ENCODE measurements at regions of chr6 and their contacts with region 1.

Region 1: GRCh38 chr6:136226027-136226673 is 24.0 kb downstream of the MTFR2 start:
- DNase-seq: peak in 1 of 2 experiments; percentile 72
- H3K4me3 ChIP-seq: no peak overlapping the region
- H3K27ac ChIP-seq: no peak overlapping the region
- H3K4me1 ChIP-seq: no peaks in the 10 kb centered on the region
- H3K27me3 ChIP-seq: no peaks in the 10 kb centered on the region
- CTCF ChIP-seq: peak; percentile 74 to 97 (median 92)
- EP300 ChIP-seq: no peak
- POLR2A ChIP-seq: no peak
- RAD21 ChIP-seq: peak; percentile 100

Region 2: DNA sequence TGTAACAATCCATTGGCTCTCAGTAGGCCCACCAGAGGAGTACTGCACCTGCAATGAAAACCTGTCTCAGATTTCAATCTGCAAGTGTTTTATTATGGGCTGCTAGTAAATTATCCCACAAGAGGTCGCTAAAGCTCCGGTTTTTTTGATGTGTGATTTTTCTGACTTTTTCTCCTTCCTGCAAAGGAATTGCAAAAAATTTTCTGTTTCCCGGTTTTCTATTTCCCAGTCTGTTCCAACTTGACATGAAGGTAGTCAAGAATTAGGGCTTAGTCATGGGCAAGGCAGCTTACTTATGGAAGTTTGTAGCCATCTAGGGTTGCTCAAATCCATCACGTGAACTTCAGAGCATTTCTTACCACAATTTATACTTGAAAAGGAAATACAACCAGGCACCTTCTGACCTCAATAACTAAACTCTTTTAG is 690.1 kb before region 1 on chr6:
- CTCF ChIA-PET with region 1: interaction called, 16 read pairs
- POLR2A ChIA-PET with region 1: no interaction called
- DNase-seq: no peak
- H3K4me3 ChIP-seq: no peak overlapping the region
- H3K27ac ChIP-seq: no peak overlapping the region
- H3K4me1 ChIP-seq: peaks cover 0 to 6% (median 4%) of the 10 kb centered on the region in 4 experiments; a peak in 4 of 7 replicates
- H3K27me3 ChIP-seq: no peaks in the 10 kb centered on the region
- CTCF ChIP-seq: peak in 2 of 3 experiments; percentile 57 to 61; a peak in 2 of 4 replicates
- EP300 ChIP-seq: no peak
- POLR2A ChIP-seq: no peak
- RAD21 ChIP-seq: peak; percentile 77 to 81

Region 3: GRCh38 chr6:135909737-135910387 is 316.3 kb before region 1 on chr6:
- CTCF ChIA-PET with region 1: interaction called, 10 read pairs
- POLR2A ChIA-PET with region 1: no interaction called
- DNase-seq: peak; percentile 44 to 60
- H3K4me3 ChIP-seq: no peak overlapping the region
- H3K27ac ChIP-seq: no peak overlapping the region
- H3K4me1 ChIP-seq: no peaks in the 10 kb centered on the region
- H3K27me3 ChIP-seq: no peaks in the 10 kb centered on the region
- CTCF ChIP-seq: peak in 2 of 3 experiments; percentile 83 to 87; a peak in 3 of 4 replicates
- EP300 ChIP-seq: no peak
- POLR2A ChIP-seq: no peak
- RAD21 ChIP-seq: peak; percentile 77 to 87

Region 4: GRCh38 chr6:136201732-136202131 is 24.4 kb before region 1 on chr6:
- CTCF ChIA-PET with region 1: interaction called, 16 read pairs
- POLR2A ChIA-PET with region 1: no interaction called
- DNase-seq: no peak
- H3K4me3 ChIP-seq: no peak overlapping the region
- H3K27ac ChIP-seq: no peak overlapping the region
- H3K4me1 ChIP-seq: no peaks in the 10 kb centered on the region; a peak in 1 of 7 replicates
- H3K27me3 ChIP-seq: no peaks in the 10 kb centered on the region
- CTCF ChIP-seq: no peak
- EP300 ChIP-seq: no peak
- POLR2A ChIP-seq: no peak
- RAD21 ChIP-seq: peak in 1 of 2 experiments; percentile 1; a peak in 1 of 4 replicates

Region 5: GRCh38 chr6:136244061-136244616 is 18.0 kb after region 1 on chr6:
- CTCF ChIA-PET with region 1: interaction called, 12 read pairs
- POLR2A ChIA-PET with region 1: no interaction called
- DNase-seq: no peak
- H3K4me3 ChIP-seq: no peak overlapping the region
- H3K27ac ChIP-seq: no peak overlapping the region
- H3K4me1 ChIP-seq: no peaks in the 10 kb centered on the region; a peak in 1 of 7 replicates
- H3K27me3 ChIP-seq: no peaks in the 10 kb centered on the region
- CTCF ChIP-seq: no peak
- EP300 ChIP-seq: no peak
- POLR2A ChIP-seq: no peak
- RAD21 ChIP-seq: no peak

Measured in H1 (cell line).